CD14-positive monocyte (primary cell): ENCODE measurements at regions of chr12 and their contacts with region 1.

Region 1: DNA sequence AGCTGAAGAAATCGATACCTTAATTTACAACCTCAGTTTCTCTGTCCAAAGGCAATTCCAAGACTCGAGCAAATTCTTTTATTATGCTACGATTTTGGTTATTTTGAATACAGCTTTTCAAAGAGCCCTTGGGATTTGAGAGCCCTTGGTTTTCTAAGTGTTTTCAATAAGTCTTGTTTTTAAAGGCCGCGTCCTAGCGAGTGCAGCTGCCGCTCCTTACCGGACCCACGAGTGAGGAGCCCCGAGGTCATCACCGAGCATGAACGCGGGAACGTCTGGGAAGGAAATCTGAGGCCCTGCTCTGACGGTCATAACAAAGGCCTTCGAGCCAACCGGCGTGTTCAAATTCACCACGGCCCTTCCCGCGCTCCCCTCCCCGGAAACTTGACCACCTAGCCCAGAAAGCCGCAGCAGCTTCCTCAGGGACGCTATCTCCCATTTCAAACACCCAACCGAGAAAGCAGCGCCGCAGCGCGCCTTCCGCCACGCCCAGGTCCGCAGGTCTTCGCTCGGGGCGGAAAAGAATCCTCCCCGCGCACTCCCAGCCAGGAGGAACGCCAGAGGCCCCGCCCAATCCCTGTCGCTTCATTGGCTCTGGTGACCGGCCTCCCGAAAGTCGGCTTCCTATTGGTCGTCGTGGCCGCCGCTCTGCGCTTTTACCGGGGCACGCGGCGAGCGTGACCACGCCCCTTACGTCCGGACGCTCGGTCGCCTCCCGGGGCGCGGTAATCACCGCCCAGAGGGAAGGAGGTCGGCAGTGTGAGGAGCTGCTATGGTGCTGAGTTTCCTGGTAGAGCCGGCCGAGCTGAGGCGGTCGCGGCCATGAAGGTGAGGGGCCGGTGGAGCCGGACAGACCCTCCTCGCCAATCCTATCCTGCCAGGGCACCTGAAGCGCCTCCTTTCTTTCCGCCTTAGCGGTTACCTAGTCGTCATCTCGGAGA is at the start of gene RNF34:
- DNase-seq: peak; percentile 95 to 98 (median 98)
- H3K4me3 ChIP-seq: peak within 1 kb of the TSS; percentile 68 to 92 (median 89)
- H3K4me3 Mint-ChIP-seq: peak within 1 kb of the TSS; percentile 96 to 98
- H3K27ac ChIP-seq: peak within 1 kb of the TSS; percentile 68 to 85
- H3K27ac Mint-ChIP-seq: peak within 1 kb of the TSS; percentile 82 to 96 (median 94)
- H3K4me1 ChIP-seq: peaks cover 18 to 31% of the 10 kb centered on the region in 2 donors
- H3K4me1 Mint-ChIP-seq: peaks cover 29% of the 10 kb centered on the region
- H3K27me3 ChIP-seq: no peaks in the 10 kb centered on the region
- H3K27me3 Mint-ChIP-seq: peaks cover 0 to 1% (median 0%) of the 10 kb centered on the region in 3 donors
- CTCF ChIP-seq: no peak
- polyA plus RNA-seq, gene RNF34: 15.5 to 23.8 (median 19.2) TPM

Region 2: GRCh38 chr12:121345151-121345815 is 54.4 kb before region 1 on chr12:
- intact Hi-C with region 1: loop called (anchors 5 to 10 kb)
- DNase-seq: no peak
- H3K4me3 ChIP-seq: no peak overlapping the region
- H3K4me3 Mint-ChIP-seq: no peak overlapping the region
- H3K27ac ChIP-seq: no peak overlapping the region
- H3K27ac Mint-ChIP-seq: peak overlapping the region in 1 of 7 donors; percentile 52
- H3K4me1 ChIP-seq: no peaks in the 10 kb centered on the region
- H3K4me1 Mint-ChIP-seq: peaks cover 4% of the 10 kb centered on the region
- H3K27me3 ChIP-seq: no peaks in the 10 kb centered on the region
- H3K27me3 Mint-ChIP-seq: peaks cover 0 to 1% (median 0%) of the 10 kb centered on the region in 3 donors
- CTCF ChIP-seq: no peak

Region 3: DNA sequence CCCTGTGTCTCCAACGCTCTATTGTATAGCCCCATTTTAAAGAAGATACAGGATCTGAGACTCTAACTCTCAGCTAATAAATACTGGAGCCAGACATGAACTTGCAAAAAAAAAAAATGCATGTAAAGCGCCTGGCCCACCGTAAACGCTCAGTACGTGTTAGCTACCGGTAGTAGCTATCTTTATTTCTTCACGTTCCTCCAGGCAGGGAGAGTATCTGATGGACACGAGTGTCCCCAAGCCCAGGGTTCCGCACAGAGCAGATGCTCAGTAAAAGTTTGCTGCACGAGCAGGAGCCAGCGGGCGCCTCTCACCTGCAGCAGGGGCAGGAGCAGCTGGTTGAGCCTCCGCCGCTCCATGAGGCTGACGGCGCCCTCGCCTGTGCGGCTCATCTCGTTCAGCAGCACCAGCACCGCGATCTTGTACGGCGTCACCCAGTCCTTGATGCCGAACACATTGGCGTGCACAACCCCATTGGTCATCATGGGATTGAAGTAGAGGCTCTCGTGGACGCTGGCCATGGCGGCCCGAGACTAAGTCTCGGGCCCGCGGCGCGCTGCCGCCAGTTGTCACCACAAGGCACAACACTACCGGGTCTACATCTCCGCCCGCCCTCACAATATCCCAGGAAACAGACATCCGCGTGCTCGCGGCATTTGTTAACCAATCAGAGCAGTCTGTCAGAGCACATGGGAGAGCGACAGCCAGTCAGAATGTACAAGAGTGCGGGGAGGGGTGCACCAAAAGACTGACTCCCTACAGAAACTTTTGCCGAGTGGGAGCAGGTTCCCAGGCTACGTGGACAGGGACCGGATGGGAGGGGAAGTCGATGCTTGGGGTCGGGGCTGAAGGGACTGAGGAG is 47.6 kb before region 1 on chr12 and contains the start of gene ANAPC5:
- intact Hi-C with region 1: loop called (anchors 5 to 10 kb)
- DNase-seq: peak; percentile 96 to 97 (median 97)
- H3K4me3 ChIP-seq: peak within 1 kb of the TSS; percentile 76 to 99 (median 87)
- H3K4me3 Mint-ChIP-seq: peak within 1 kb of the TSS; percentile 93 to 99
- H3K27ac ChIP-seq: peak within 1 kb of the TSS; percentile 88 to 96
- H3K27ac Mint-ChIP-seq: peak within 1 kb of the TSS; percentile 95 to 98 (median 97)
- H3K4me1 ChIP-seq: peaks cover 18 to 21% of the 10 kb centered on the region in 2 donors
- H3K4me1 Mint-ChIP-seq: peaks cover 23% of the 10 kb centered on the region
- H3K27me3 ChIP-seq: no peaks in the 10 kb centered on the region
- H3K27me3 Mint-ChIP-seq: peaks cover 1 to 4% (median 3%) of the 10 kb centered on the region in 3 donors
- CTCF ChIP-seq: no peak
- polyA plus RNA-seq, gene ANAPC5: 67.3 to 161 (median 114) TPM

Region 4: DNA sequence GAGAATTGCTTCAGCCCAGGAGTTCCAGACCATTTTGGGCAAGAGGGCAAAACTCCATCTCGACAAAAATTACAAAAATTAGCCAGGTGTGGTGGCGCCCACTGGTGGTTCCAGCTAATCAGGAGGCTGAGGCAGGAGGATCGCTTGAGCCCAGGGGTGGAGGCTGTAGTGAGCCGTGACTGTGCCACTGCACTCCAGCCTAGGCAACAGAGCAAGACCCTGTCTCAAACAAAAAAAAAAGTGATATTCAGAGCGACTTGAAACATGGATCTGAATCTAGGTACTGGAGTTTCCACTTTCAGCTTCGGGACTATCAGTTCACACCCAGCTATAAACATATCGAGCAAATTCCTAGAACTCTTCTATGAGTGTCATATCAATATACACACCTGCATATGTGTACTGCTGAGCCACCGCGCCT is 16.1 kb before region 1 on chr12:
- intact Hi-C with region 1: no loop called
- DNase-seq: no peak
- H3K4me3 ChIP-seq: no peak overlapping the region
- H3K4me3 Mint-ChIP-seq: no peak overlapping the region
- H3K27ac ChIP-seq: no peak overlapping the region
- H3K27ac Mint-ChIP-seq: no peak overlapping the region
- H3K4me1 ChIP-seq: peaks cover 7 to 10% of the 10 kb centered on the region in 2 donors
- H3K4me1 Mint-ChIP-seq: peaks cover 8% of the 10 kb centered on the region
- H3K27me3 ChIP-seq: no peaks in the 10 kb centered on the region
- H3K27me3 Mint-ChIP-seq: peaks cover 2 to 5% (median 4%) of the 10 kb centered on the region in 3 donors
- CTCF ChIP-seq: no peak

Region 5: DNA sequence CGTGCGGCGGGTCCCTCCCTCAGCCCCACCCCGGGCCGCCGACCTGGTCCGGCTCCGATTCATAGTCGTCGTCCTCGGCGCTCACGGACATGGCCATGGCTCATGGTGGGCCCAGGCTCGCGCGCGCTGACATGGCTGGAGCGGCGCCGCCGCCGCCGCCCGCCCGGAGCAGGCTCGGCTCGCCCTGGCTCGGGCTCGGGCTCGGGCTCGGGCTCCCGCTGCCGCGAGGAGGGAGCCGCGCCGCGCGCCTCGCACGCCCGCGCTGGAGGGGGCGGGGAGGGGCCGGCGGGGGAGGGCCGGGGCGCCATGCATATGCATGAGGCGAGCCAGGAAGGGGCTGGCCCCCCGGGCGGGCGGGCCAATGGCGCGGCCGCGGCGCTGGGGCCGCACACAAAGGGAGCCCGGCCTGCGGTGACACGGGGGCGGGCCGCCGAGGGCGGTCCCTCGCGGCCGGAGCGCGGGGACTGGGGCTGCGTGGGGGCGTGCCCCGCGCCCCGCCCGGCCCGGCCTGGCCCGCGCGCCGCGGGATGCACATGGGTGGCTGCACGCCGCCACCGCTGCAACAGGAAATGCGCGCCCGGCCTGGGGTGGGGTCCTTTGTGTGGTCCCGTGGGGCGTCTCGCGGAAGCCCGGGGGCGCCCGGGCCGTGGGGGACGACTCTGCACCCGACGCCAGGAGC is 67.6 kb after region 1 on chr12:
- intact Hi-C with region 1: loop called in 1 of 2 experiments (anchors 10 kb)
- DNase-seq: peak; percentile 78 to 84 (median 81)
- H3K4me3 ChIP-seq: peak overlapping the region; percentile 37 to 77 (median 47)
- H3K4me3 Mint-ChIP-seq: peak overlapping the region; percentile 26 to 51
- H3K27ac ChIP-seq: peak overlapping the region in 1 of 2 donors; percentile 59
- H3K27ac Mint-ChIP-seq: no peak overlapping the region
- H3K4me1 ChIP-seq: peaks cover 44 to 55% of the 10 kb centered on the region in 2 donors
- H3K4me1 Mint-ChIP-seq: peaks cover 42% of the 10 kb centered on the region
- H3K27me3 ChIP-seq: no peaks in the 10 kb centered on the region
- H3K27me3 Mint-ChIP-seq: peaks cover 0 to 4% (median 4%) of the 10 kb centered on the region in 3 donors
- CTCF ChIP-seq: no peak

Region 6: GRCh38 chr12:121894633-121895032 is 495.0 kb after region 1 on chr12:
- intact Hi-C with region 1: no loop called
- DNase-seq: no peak
- H3K4me3 ChIP-seq: no peak overlapping the region
- H3K4me3 Mint-ChIP-seq: no peak overlapping the region
- H3K27ac ChIP-seq: no peak overlapping the region
- H3K27ac Mint-ChIP-seq: peak overlapping the region in 4 of 7 donors; percentile 6 to 60 (median 26)
- H3K4me1 ChIP-seq: peaks cover 7 to 10% of the 10 kb centered on the region in 2 donors
- H3K4me1 Mint-ChIP-seq: peaks cover 14% of the 10 kb centered on the region
- H3K27me3 ChIP-seq: no peaks in the 10 kb centered on the region
- H3K27me3 Mint-ChIP-seq: peaks cover 0 to 2% (median 0%) of the 10 kb centered on the region in 3 donors
- CTCF ChIP-seq: no peak